ENCODE measurements at regions of chr17 and their contacts with region 1.

Region 1: DNA sequence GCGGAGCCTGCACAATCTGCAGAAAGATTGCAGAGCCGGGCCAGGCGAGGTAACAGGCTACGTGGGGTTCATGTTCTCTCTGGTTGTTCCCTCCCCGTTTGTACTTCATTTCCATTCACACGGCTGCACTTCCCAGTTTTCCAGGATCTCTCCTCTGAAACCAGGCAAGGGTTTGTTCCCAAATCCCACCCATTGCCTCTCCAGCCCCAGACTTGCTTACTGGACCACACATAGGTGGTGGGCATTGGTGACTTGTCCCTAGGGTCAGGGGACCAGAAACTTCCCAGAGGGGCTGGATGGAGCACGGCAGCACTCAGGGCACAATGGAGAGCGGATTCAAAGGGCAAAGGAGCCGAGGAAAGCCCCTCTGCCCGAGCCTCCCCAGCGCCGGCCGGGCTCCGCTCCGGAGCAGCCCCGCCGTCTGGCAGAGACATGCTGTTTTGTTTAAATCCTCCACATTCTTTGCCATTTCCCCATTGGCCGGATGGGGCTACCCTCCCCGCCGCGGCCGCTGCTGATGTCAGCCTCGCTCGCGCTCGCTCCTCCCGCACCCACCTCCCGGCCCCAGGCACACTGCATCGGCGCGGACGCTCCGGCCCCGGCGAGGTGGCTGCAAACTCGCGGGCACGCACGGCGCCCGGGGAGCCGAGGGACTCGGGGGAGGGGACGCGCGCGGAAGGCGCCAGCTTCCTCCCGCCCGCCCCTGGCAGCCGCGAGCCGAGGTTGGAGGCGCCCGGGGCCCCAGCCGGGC is at the start of gene PITPNC1:
- DNase-seq: peak; percentile 46
- H3K4me3 ChIP-seq: peak within 1 kb of the TSS; percentile 88
- H3K27me3 ChIP-seq: no peaks in the 10 kb centered on the region
- CTCF ChIP-seq: 0 out of 2 replicates have a peak, but pooled peaks have one; percentile 2
- polyA plus RNA-seq, gene PITPNC1: 4.6 and 5.5 TPM in 2 replicates

Region 2: GRCh38 chr17:67297454-67297960 is 79.4 kb before region 1 on chr17:
- CTCF ChIA-PET with region 1: no interaction called
- POLR2A ChIA-PET with region 1: no interaction called
- DNase-seq: no peak
- H3K4me3 ChIP-seq: no peak overlapping the region
- H3K27me3 ChIP-seq: no peaks in the 10 kb centered on the region
- CTCF ChIP-seq: no peak

Region 3: DNA sequence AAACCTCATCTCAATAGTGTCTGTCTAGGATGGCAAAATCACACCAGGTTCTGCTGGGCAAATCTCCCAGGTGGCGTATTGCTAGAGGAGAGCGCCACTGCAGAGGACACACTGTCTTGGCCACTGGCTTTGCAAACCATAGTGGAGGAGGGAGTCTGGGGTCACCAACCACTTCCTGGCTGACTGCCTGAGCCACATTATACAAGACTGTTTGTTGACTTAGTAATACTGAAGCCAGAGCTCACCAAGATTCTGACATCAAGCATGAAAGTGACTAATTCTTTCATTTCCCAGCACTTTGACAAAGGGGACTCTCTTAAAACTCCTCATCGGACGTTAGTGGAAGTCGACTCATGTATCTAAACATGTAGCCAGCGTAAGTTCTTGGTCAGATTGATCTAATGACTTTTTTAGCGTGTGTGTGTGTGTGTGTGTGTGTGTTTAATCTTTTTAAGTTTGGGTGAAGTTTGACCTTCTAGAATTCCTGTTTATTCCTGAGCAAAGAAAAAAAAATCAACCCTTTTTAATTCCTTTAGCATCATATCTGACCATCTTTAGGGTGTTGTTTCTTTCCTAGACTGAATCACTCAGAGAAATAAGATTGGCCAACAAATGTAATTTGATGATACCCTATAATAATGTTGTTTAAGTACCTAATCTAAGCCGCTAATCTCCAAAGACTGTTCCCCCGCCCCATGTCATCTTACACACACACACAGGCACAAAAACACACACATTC is 13.9 kb after region 1 on chr17:
- CTCF ChIA-PET with region 1: interaction called, 34 read pairs
- POLR2A ChIA-PET with region 1: no interaction called
- DNase-seq: peak; percentile 90
- H3K4me3 ChIP-seq: no peak overlapping the region
- H3K27me3 ChIP-seq: no peaks in the 10 kb centered on the region
- CTCF ChIP-seq: no peak

Region 4: DNA sequence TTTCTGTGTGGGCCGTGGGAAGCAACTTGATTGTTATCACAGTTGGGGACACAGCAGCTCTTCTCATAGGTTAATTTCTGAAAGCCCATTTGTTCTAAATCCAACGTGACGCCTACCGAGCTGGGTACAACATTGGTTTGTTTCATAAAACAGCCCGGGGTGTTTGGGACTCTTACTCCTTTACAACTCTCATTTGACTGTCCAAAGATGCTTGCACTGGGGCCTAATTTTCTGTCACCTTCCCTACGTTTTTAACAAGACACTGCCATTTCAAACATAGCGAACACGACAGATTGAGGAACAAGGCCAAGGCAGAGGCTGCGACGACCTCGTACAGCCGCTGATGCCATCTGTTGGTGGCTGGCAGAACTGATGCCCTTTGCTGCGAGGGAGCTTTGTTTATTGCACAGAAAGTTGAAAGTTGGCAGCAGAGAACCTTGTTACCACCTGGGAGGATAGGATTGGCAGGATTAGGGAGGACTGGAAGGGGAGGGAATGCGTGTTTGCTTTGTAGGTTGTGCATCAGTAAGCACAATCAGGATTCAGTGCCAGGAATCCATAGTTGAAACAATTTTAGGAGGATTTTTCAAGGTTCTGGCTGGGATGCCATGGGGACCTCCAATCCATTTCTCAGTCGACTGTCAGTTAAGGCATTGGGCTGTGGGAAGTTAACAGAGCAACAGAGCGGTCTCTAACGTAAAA is 98.5 kb after region 1 on chr17:
- CTCF ChIA-PET with region 1: interaction called, 58 read pairs
- POLR2A ChIA-PET with region 1: no interaction called
- DNase-seq: no peak
- H3K4me3 ChIP-seq: no peak overlapping the region
- H3K27me3 ChIP-seq: no peaks in the 10 kb centered on the region
- CTCF ChIP-seq: peak; percentile 88

Region 5: GRCh38 chr17:67602956-67603355 is 226.0 kb after region 1 on chr17:
- CTCF ChIA-PET with region 1: interaction called, 23 read pairs
- POLR2A ChIA-PET with region 1: no interaction called
- DNase-seq: no peak
- H3K4me3 ChIP-seq: no peak overlapping the region
- H3K27me3 ChIP-seq: no peaks in the 10 kb centered on the region
- CTCF ChIP-seq: peak; percentile 42

Region 6: GRCh38 chr17:67647482-67647881 is 270.6 kb after region 1 on chr17:
- CTCF ChIA-PET with region 1: interaction called, 13 read pairs
- POLR2A ChIA-PET with region 1: no interaction called
- DNase-seq: no peak
- H3K4me3 ChIP-seq: no peak overlapping the region
- H3K27me3 ChIP-seq: no peaks in the 10 kb centered on the region
- CTCF ChIP-seq: no peak

Region 7: DNA sequence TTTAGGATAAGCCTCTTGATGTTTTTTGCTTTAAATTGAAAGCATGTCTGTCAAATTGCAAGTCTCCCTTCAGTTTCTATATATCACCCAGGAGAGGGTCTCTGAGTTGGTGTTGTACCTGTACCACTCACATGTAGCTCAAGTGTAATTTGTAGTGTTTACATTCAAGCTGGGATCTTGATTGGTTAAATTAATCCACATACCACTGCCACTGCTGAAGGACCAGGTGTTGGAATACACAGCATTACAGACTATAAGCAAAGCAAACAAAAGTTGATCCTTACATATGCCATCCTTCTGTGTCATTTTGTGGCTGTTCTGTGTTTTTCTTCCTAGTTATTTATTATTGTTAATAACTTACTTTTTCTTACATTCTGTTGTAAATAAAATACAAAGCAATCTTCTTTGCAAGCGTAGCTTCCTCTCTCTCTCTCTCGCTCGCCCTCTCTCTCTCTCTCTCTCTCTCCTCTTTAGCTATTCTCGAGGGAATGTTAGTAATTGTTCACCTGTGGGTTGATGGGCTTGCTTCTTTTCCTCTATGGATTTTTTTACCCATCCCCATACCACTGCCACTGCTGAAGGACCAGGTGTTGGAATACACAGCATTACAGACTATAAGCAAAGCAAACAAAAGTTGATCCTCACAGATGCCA is 320.1 kb after region 1 on chr17:
- CTCF ChIA-PET with region 1: interaction called, 20 read pairs
- POLR2A ChIA-PET with region 1: no interaction called
- DNase-seq: no peak
- H3K4me3 ChIP-seq: no peak overlapping the region
- H3K27me3 ChIP-seq: no peaks in the 10 kb centered on the region
- CTCF ChIP-seq: no peak